PC-3 (cell line): ENCODE measurements at regions of chr4 and their contacts with region 1.

Region 1: GRCh38 chr4:53196882-53197771 is 168.7 kb downstream of the SCFD2 start:
- DNase-seq: peak; percentile 89
- ATAC-seq: peak; percentile 71
- H3K4me3 ChIP-seq: no peak overlapping the region
- H3K27ac ChIP-seq: no peak overlapping the region
- H3K4me1 ChIP-seq: no peaks in the 10 kb centered on the region
- H3K27me3 ChIP-seq: no peaks in the 10 kb centered on the region
- CTCF ChIP-seq: peak; percentile 95

Region 2: DNA sequence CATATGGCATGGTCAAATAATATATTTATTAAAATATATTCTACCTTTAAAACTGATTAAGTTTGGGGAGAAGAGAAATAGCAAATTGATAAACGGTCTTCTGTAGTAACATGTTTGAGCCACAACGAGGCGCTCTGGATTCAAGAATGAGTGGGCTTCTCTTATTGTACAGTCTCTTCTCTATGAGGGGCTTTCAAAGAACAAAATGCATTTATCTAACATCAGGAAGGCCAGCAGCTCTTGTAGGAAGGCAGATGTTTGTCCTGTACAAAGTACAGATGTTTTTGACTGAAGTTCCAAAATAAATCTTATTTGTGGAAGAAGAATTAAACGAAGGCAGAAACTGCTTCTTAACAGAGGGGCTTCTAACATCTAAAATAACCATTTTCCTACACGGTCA is 181.4 kb before region 1 on chr4:
- CTCF ChIA-PET with region 1: interaction called, 5 read pairs
- POLR2A ChIA-PET with region 1: no interaction called
- intact Hi-C with region 1: loop called (anchors 5 kb)
- DNase-seq: peak; percentile 53
- ATAC-seq: no peak
- H3K4me3 ChIP-seq: no peak overlapping the region
- H3K27ac ChIP-seq: no peak overlapping the region
- H3K4me1 ChIP-seq: peaks cover 7% of the 10 kb centered on the region
- H3K27me3 ChIP-seq: no peaks in the 10 kb centered on the region
- CTCF ChIP-seq: peak; percentile 83

Region 3: DNA sequence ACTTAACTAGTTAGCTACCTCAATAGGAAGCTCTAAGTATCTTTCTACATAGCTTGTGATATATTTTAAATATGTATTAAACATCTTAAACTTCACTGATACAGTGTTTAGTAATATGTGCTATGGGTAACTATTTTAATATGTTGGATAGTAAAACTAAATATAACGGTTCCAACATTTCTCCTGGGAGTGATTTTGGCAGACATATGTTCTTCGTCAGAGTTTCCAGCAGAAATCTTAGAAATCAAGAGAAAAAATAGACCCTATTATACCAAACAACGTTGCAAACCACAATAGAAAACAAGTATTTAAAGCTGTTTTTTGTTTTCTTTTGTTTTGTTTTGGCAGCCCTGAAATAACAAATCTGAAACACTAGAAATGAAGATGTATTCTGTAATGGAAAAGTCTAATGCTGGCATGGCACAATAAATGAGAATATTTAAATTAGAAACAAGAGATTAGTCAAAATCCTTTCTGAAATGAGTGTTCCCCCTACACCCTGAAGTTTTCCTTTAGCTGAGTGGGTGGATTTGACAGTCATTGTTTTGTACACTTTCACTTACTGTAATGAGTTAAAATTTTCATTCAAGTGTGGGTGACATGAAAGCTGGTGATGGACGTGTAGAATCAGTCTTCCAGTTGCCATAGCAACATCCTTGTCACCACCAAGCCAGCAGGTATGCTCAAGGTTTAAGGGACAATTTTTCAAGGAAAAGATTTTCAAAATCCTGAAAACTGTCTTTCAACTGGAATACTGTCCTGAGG is 64.8 kb before region 1 on chr4:
- CTCF ChIA-PET with region 1: no interaction called
- POLR2A ChIA-PET with region 1: no interaction called
- intact Hi-C with region 1: no loop called
- DNase-seq: no peak
- ATAC-seq: no peak
- H3K4me3 ChIP-seq: no peak overlapping the region
- H3K27ac ChIP-seq: no peak overlapping the region
- H3K4me1 ChIP-seq: no peaks in the 10 kb centered on the region
- H3K27me3 ChIP-seq: no peaks in the 10 kb centered on the region
- CTCF ChIP-seq: no peak

Region 4: DNA sequence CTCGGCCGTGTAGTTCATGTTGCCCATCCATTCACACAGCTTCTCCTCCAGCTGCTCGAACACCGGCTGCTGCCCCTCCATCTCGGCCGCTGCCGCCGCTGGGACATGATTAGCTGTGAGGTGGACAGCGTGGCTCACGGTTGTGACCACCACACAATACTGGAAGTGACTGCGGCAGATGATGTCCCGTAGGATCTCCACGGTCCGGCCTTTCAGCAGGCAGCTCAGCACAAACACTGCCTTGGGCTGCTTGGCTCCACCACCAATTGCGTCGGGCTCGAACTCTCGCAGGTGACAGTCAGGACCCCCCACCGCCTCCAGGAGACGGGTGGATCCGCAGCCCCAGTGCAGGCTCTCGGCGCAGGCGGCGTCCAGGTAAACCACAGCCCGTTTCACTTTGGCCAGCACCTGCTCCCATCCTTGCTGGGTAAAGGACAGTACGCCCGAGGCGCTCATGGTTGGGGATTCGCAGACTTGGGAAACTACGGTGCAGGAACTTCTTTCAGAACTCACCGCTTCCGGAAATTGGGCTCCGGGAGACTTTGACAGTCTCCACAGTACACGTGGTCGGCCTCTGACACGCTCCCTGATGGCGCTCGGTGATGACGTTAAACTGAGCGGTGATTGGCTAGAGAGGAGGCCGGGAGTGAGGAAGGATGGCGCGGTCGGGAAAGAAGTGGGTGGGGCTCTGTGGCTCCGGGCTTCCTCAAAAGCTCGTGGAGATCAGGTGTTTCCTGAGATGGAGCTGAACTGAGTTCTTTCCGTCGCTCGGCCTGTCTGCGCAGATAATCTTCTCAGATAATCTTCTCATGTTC is 168.6 kb after region 1 on chr4 and contains the start of gene SCFD2:
- CTCF ChIA-PET with region 1: no interaction called
- POLR2A ChIA-PET with region 1: no interaction called
- intact Hi-C with region 1: loop called (anchors 5 kb)
- DNase-seq: peak; percentile 100
- ATAC-seq: peak; percentile 92
- H3K4me3 ChIP-seq: peak within 1 kb of the TSS; percentile 95
- H3K27ac ChIP-seq: peak within 1 kb of the TSS; percentile 51
- H3K4me1 ChIP-seq: peaks cover 34% of the 10 kb centered on the region
- H3K27me3 ChIP-seq: no peaks in the 10 kb centered on the region
- CTCF ChIP-seq: no peak
- total RNA-seq, gene SCFD2: 36.6 and 40.7 TPM in 2 replicates

Region 5: GRCh38 chr4:53490965-53491622 is 294.0 kb after region 1 on chr4:
- CTCF ChIA-PET with region 1: no interaction called
- POLR2A ChIA-PET with region 1: no interaction called
- intact Hi-C with region 1: loop called (anchors 5 kb)
- DNase-seq: peak; percentile 87
- ATAC-seq: peak; percentile 64
- H3K4me3 ChIP-seq: no peak overlapping the region
- H3K27ac ChIP-seq: no peak overlapping the region
- H3K4me1 ChIP-seq: peaks cover 9% of the 10 kb centered on the region
- H3K27me3 ChIP-seq: no peaks in the 10 kb centered on the region
- CTCF ChIP-seq: peak; percentile 91

Region 6: DNA sequence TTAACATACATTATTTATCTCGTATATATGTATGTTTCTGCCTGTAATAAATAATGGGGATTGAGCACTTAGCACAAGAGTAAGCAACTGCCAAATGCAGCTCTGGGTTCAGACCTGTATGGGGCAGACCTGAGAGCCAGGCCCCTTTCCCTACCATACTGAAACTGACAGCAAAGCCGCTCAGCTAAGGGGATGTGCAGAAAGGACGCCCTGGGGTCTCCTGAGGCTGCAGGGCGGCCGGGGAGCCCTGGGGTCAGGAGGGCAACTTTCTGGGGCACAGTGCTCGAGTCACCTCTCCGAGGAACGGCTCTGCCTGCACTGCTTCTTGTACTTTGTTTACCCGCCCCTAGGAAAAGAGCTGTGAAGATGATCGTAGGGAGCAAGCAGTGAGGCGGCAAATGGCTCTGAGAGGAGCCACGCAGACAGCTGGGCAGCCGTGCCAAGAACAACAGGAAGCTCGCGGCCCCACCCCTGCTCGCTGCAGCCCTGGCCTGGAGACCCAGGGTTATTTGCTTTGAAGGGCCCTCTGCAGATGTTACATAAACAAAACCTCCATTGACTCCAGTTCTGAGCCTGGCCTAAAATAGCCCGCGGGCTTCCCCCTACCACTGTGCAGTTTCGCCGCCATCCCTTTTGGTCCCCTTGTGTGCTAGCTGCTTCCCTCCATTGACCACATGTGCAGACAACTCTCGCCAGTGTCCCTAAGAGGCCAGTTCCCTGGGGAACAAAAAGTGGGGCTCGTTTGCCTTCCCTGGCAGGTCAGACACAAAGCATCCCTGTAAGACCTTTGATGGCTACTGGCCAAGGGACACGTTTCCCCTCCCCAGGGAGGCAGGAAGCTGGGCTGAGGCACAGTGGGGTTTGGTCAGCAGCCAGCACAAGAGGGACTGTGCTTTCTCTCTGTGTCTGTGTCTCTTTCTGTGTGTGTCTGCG is 505.5 kb after region 1 on chr4:
- CTCF ChIA-PET with region 1: no interaction called
- POLR2A ChIA-PET with region 1: no interaction called
- intact Hi-C with region 1: loop called (anchors 1 kb)
- DNase-seq: peak; percentile 86
- ATAC-seq: peak; percentile 88
- H3K4me3 ChIP-seq: peak overlapping the region; percentile 63
- H3K27ac ChIP-seq: peak overlapping the region; percentile 88
- H3K4me1 ChIP-seq: peaks cover 34% of the 10 kb centered on the region
- H3K27me3 ChIP-seq: no peaks in the 10 kb centered on the region
- CTCF ChIP-seq: 0 out of 2 replicates have a peak, but pooled peaks have one; percentile 15